ENCODE measurements at regions of chr2 and their contacts with region 1.

Region 1: DNA sequence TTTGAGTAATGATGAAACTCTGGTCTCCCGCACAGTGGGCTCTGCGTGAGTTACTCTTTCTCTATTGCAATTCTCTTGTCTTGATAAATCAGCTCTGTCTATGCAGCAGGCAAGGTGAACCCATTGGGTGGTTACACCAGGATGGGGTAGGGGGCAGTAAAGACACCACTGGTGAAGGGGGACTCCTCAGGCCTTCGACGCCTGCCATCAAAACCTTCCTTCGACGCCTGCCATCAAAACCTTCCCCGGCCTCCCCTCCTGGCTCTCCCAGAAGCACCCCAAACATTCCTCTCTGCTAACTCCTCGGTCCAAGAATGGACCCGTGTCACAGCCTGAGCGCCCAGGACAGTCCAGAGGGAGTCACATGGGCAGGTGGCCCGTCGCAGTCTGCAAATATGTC is 4.8 kb upstream of the STARD7 start:
- DNase-seq: no peak
- H3K4me3 ChIP-seq: no peak overlapping the region
- H3K27ac ChIP-seq: no peak overlapping the region
- H3K4me1 ChIP-seq: peaks cover 0 to 19% (median 14%) of the 10 kb centered on the region in 4 donors
- H3K27me3 ChIP-seq: no peaks in the 10 kb centered on the region
- CTCF ChIP-seq: no peak
- EP300 ChIP-seq: no peak
- POLR2A ChIP-seq: no peak

Region 2: DNA sequence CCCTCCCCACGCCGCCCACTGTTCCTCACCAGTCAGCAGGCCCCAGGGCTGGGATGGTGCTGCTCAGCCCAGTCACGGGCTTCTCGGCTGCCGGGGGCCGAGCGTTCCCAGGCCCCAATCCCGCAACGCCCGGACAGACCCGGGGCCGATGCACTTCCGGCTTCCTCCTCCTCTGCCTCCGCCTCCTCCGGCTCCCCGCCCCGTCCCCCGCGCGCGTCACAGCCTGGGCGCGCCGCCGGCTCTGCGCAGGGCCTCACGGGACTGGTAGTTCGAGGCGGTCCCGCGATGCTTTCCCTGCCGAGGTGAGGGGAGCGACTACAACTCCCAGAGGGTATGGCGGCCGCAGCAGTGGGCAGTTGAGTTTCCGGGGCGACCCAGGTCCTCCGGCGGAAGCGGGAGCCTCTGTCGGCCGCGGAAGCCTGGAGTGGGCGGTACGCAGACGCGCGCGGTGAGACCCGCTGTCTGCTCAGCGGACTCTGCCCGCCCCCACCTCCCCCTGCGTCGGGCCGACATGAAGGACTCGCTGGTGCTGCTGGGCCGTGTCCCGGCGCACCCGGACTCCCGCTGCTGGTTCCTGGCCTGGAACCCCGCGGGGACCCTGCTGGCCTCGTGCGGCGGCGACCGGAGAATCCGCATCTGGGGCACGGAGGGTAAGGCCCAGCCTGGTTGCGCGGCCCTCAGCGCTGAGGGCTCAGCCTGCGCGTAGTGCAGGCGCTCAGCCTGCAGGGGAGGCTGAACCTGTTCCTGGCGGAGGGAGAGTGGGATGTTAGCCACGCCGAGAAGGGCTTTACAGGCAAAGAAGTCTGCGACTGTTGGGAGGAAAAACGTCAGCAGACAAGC is 52.7 kb after region 1 on chr2 and contains the starts of genes CIAO1 and TMEM127:
- intact Hi-C with region 1: loop called (anchors 10 kb)
- DNase-seq: peak; percentile 99 to 100
- H3K4me3 ChIP-seq: peak within 1 kb of the TSS; percentile 91 to 100 (median 98)
- H3K27ac ChIP-seq: peak within 1 kb of the TSS; percentile 90 to 98 (median 94)
- H3K4me1 ChIP-seq: peaks cover 40 to 56% (median 54%) of the 10 kb centered on the region in 4 donors
- H3K27me3 ChIP-seq: no peaks in the 10 kb centered on the region
- CTCF ChIP-seq: peak in 2 of 7 experiments; percentile 9 to 24
- EP300 ChIP-seq: no peak
- POLR2A ChIP-seq: peak in 1 of 4 donors; percentile 59
- total RNA-seq, gene CIAO1: 58.3 to 161 (median 95.3) TPM
- total RNA-seq, gene TMEM127: 5.8 to 51.6 (median 21.9) TPM